A549 (cell line): ENCODE measurements at regions of chr2 and their contacts with region 1.

Region 1: GRCh38 chr2:3379647-3380534 is at the start of gene TRAPPC12:
- DNase-seq: peak; percentile 90 to 96
- ATAC-seq: peak; percentile 81 to 88
- H3K4me3 ChIP-seq: peak within 1 kb of the TSS; percentile 81
- H3K27ac ChIP-seq: peak within 1 kb of the TSS; percentile 88 to 96
- H3K4me1 ChIP-seq: peaks cover 23% of the 10 kb centered on the region
- CTCF ChIP-seq: peak; percentile 49
- EP300 ChIP-seq: no peak
- POLR2A ChIP-seq: peak; percentile 88
- RAD21 ChIP-seq: 0 out of 5 replicates have a peak, but pooled peaks of 1 of the 2 experiments have one; percentile 16
- polyA plus RNA-seq, gene TRAPPC12: 55.0 and 71.8 TPM in 2 replicates

Region 2: DNA sequence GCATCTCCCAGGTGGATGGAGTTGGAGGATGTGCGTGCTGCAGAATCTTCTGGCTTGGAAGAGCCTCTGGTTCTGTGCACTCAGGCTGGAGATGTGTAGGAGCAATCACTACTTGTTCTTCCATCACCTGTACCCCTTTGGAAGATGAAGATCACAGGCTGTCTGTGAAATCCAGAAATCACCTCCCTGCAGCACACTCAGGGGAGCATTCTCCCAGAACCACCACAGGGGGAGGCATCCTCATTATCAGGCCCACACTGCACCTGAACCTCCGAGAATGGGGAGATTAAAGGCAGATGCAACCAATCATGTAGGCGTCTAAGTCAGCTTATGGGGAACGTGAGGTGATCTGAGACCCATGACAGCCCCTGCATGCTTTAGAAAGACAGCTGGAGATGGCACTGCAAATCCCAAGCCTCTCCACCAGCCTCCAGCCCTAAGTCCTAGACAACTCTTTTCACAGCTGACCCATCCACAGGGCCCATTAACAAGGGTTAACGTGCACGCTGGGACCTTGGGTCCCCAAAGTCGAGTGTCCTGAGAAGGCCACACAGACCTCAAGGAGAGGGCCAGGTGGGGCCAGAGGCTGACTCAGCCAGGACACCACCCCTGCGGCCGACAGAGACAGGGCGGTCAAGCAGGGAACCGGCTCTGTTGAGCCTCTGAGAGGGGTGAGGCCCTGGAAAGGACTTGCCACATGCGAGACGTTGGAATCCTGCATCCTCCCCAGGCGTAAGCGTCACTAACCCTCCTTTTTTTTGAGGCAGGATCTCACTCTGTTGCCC is 317.2 kb before region 1 on chr2:
- CTCF ChIA-PET with region 1: no interaction called
- POLR2A ChIA-PET with region 1: no interaction called
- DNase-seq: no peak
- ATAC-seq: peak in 1 of 2 experiments; percentile 41; a peak in 3 of 6 replicates
- H3K4me3 ChIP-seq: no peak overlapping the region
- H3K27ac ChIP-seq: no peak overlapping the region
- H3K4me1 ChIP-seq: no peaks in the 10 kb centered on the region
- CTCF ChIP-seq: no peak
- EP300 ChIP-seq: no peak
- POLR2A ChIP-seq: no peak
- RAD21 ChIP-seq: no peak

Region 3: GRCh38 chr2:3365219-3365618 is 14.7 kb before region 1 on chr2:
- CTCF ChIA-PET with region 1: interaction called, 18 read pairs
- POLR2A ChIA-PET with region 1: no interaction called
- DNase-seq: no peak
- ATAC-seq: no peak
- H3K4me3 ChIP-seq: no peak overlapping the region
- H3K27ac ChIP-seq: no peak overlapping the region
- H3K4me1 ChIP-seq: no peaks in the 10 kb centered on the region; the same call in 2 of the 3 replicates
- CTCF ChIP-seq: no peak
- EP300 ChIP-seq: no peak
- POLR2A ChIP-seq: no peak
- RAD21 ChIP-seq: no peak